ENCODE measurements at regions of chr15 and their contacts with region 1.

Region 1: DNA sequence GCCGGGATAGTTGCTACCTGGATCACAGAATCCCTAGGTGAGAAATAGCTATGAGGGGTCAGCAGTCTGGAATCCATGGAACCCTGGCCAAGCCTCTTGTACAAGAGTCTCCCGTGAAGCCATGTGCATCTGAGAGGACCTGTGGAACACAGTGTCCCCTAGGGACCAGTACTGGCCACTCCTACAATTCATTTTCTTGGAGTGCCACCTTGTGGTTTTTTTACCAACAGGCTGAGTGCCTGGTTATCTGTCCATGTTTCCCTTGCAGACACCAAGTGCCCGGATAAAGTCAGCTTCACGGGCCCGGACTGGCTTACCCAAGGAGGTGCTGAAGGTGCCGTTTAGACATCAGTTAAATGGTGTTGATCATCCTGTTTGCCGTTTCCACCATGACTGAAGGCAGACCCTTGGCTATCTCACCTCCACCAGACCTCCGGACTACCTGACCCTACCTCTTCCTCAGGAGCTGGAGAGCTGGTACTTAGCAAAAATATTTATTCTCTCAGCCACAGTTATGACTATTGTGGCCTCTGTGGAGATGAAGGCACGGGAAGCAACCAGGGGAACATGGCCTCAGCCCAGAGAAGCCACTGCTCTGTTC is 93.9 kb downstream of the RBPMS2 start:
- DNase-seq: no peak
- ATAC-seq: peak; percentile 73

Region 2: DNA sequence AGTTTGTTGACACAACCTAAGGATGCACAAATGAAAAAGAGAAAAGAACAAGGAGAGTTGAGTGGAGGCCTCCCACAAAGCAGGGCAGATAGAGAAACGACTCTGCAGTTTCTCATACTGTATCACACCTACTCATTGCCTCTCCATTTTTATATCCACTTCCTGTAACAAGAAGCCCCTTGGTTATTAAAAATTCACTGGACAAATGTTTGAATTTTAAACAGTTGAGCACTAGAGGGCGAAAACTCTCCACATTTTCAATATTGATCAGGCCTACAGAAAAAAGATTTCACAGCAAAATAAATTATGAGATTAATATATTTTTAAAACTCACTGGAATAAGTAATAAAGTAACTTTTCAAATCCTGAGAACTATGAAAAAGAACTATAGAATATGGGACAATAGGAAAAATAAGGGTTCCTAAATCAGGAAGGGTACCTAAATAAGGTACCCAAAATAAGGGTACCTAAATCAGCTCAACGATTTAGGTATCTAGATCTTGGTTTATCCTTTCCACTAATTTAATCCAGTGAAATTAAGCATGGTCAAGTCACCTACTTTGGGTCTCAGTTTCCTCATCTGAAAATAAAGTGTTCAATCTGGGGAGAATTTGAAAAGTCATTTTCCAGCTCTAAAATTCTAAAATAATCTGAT is 471.7 kb before region 1 on chr15:
- intact Hi-C with region 1: loop called (anchors 5 kb)
- DNase-seq: no peak
- ATAC-seq: no peak

Region 3: GRCh38 chr15:64430000-64430735 is 251.4 kb before region 1 on chr15:
- intact Hi-C with region 1: loop called (anchors 2 kb)
- DNase-seq: no peak
- ATAC-seq: peak; percentile 92

Region 4: GRCh38 chr15:64731012-64731806 is 49.7 kb after region 1 on chr15:
- intact Hi-C with region 1: loop called (anchors 1 kb)
- DNase-seq: peak; percentile 85
- ATAC-seq: peak; percentile 74

Region 5: GRCh38 chr15:64809649-64810496 is 128.3 kb after region 1 on chr15:
- intact Hi-C with region 1: loop called (anchors 2 kb)
- DNase-seq: peak; percentile 88
- ATAC-seq: peak; percentile 87

Measured in Right ventricle myocardium inferior (tissue), 1 donor.